ENCODE measurements at regions of chr6 and their contacts with region 1.

Region 1: DNA sequence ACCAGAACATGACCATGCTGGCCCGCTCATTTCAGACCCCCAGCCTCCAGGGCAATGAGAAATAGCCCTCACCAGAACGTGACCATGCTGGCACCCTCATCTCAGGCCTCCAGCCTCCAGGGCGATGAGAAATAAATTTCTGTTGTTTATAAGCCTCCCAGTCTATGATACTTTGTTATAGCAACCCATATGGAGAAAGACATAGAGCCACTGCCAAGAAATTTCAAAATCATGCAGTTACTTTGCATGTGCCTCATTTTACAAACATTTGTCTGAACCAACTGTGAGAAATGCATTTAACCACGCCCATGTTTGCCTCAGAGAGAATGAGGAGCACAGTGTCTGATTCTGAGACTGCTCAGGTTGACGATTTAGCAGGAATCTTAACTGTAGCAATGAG is 15.5 kb downstream of the CYP39A1 start:
- DNase-seq: no peak
- H3K4me3 Mint-ChIP-seq: no peak overlapping the region
- H3K27ac Mint-ChIP-seq: no peak overlapping the region
- H3K4me1 Mint-ChIP-seq: no peaks in the 10 kb centered on the region
- H3K27me3 Mint-ChIP-seq: peaks cover 5% of the 10 kb centered on the region

Region 2: GRCh38 chr6:44674351-44675155 is 1962.6 kb before region 1 on chr6:
- intact Hi-C with region 1: loop called (anchors 10 kb)
- DNase-seq: no peak
- H3K4me3 Mint-ChIP-seq: no peak overlapping the region
- H3K27ac Mint-ChIP-seq: no peak overlapping the region
- H3K4me1 Mint-ChIP-seq: peaks cover under 1% of the 10 kb centered on the region
- H3K27me3 Mint-ChIP-seq: peaks cover 9% of the 10 kb centered on the region

Region 3: GRCh38 chr6:46437671-46438221 is 199.4 kb before region 1 on chr6:
- intact Hi-C with region 1: no loop called
- DNase-seq: no peak
- H3K4me3 Mint-ChIP-seq: no peak overlapping the region
- H3K27ac Mint-ChIP-seq: no peak overlapping the region
- H3K4me1 Mint-ChIP-seq: no peaks in the 10 kb centered on the region
- H3K27me3 Mint-ChIP-seq: peaks cover 8% of the 10 kb centered on the region